Activated CD4-positive, alpha-beta memory T cell treated with anti-CD3 and anti-CD28 coated beads, Interleukin-2, amount 10 ng/mL, durations not matched to agents 7 days and 5 days (primary cell): ENCODE measurements at regions of chr12 and their contacts with region 1.

Region 1: DNA sequence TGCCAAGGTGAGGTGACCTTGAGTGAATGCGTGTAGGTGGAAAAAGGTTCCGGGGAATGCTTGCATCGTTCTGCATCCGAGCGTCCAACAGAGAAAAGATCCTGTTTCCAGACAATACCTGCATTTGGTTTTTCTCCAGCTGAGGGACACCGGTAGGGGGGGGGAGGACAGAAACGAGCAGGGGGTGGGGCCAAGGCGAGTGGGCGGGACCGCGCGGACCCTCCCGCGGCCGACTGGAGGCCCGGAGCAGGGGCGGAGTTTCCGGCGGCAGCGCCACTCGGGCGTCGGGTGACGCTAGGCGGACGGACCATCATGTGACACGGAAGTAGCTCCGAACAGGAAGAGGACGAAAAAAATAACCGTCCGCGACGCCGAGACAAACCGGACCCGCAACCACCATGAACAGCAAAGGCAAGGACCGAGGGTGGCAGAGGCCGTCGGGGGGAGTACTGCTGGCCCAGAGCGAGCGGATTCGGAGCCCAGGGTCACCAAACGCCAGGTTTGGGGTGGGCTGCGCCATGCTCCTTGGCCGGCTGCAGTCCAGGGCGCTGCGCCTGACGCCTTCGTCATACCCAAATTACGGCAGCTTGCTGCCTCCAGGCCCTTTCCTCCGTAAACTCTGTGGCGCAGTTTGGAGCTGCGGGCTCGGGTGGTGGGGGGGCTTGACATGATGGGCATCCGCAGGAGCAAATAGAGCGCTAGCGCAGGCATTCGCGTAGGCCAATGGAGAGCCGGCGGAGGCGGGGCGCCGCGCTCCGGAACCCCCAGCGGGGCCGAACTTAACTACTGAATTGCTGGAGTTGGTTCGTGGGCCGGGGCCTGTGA is at the start of gene DAZAP2:
- DNase-seq: peak; percentile 97
- H3K4me3 Mint-ChIP-seq: peak within 1 kb of the TSS; percentile 93
- H3K27ac Mint-ChIP-seq: peak within 1 kb of the TSS; percentile 98
- H3K4me1 Mint-ChIP-seq: peaks cover 39% of the 10 kb centered on the region
- H3K27me3 Mint-ChIP-seq: peaks cover 4% of the 10 kb centered on the region
- total RNA-seq, gene DAZAP2: 247 TPM

Region 2: DNA sequence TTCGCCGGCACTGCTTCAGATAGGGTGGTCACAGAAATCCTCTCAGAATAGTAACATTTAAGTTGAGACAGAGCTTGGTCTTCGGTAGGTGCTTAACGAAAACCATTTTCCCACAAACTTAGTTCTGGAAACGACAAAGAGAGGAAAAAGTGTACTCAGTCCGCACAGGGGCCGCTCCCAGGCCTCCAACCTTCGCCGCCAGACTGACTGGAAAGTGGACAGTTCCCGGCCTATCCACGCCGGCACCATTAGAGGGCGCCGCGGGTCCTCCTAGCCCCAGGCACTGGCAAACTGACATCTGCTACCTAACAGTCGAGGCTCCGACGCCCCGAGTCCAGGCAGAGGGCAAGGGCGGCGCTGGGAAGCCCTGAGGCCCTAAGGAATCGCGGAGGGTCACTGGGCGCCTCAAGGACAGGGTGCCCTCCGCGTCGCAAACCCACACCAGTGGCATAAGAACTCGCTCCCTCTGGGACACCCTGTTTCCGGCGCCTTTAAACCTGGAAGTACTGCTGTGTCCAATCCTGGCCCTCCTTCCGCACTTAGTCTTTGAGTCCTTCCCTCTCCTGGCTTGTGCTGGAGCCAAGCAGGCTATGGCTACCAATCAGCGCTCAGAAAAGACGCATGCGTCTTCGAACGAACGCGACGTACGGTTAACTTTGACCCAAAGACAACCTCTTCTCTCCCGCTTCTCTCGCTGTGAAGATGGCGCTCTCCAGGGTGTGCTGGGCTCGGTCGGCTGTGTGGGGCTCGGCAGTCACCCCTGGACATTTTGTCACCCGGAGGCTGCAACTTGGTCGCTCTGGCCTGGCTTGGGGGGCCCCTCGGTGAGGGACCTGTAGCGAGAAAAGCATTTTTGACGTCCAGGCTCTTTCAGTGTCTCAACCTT is 190.8 kb before region 1 on chr12 and contains the start of gene LETMD1:
- CTCF ChIA-PET with region 1: no interaction called
- POLR2A ChIA-PET with region 1: interaction called, 11 read pairs
- DNase-seq: peak; percentile 93
- H3K4me3 Mint-ChIP-seq: peak within 1 kb of the TSS; percentile 94
- H3K27ac Mint-ChIP-seq: peak within 1 kb of the TSS; percentile 92
- H3K4me1 Mint-ChIP-seq: peaks cover 37% of the 10 kb centered on the region
- H3K27me3 Mint-ChIP-seq: no peaks in the 10 kb centered on the region
- total RNA-seq, gene LETMD1: 92.1 to 93.9 TPM

Region 3: DNA sequence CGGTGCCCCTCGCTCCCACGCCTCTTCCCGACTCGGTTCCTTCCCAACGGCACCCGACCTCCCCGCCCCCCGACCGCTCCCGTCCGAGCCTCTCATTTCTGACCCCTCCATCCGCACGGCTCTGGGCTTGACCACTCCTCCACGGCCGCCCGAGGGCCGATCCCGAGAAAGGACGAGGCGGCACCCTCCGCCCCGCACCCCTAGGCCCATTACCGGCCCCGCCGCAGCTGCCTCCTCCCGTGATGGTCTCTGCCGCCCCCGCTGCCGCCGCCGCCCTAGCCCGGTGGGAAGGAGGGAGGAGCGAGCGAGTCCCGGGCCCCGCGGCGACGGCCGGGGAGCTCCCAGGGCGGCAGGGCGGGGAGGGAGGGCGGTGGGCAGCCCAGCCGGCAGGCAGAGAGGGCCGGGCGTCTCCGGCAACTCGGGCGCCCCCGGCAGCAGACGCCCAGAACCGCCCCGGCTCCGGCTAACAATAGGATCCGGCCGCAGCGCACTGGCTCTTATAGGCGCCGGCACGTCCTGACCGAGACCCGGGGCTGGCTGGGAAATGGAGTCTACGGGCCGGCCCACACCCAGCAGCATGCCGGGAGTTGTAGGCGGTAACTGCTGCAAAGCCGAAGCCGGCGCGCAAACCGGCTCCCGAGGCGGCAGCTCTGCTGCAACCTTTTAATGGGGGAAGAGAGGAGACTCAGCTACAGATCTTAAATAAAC is 155.4 kb before region 1 on chr12 and contains the start of gene CSRNP2:
- CTCF ChIA-PET with region 1: no interaction called
- POLR2A ChIA-PET with region 1: interaction called, 19 read pairs
- DNase-seq: peak; percentile 96
- H3K4me3 Mint-ChIP-seq: peak within 1 kb of the TSS; percentile 92
- H3K27ac Mint-ChIP-seq: peak within 1 kb of the TSS; percentile 71
- H3K4me1 Mint-ChIP-seq: peaks cover 42% of the 10 kb centered on the region
- H3K27me3 Mint-ChIP-seq: no peaks in the 10 kb centered on the region
- total RNA-seq, gene CSRNP2: 14.7 to 16.3 TPM

Region 4: GRCh38 chr12:51320695-51321320 is 82.1 kb after region 1 on chr12:
- CTCF ChIA-PET with region 1: no interaction called
- POLR2A ChIA-PET with region 1: interaction called, 23 read pairs
- DNase-seq: no peak
- H3K4me3 Mint-ChIP-seq: peak overlapping the region; percentile 88
- H3K27ac Mint-ChIP-seq: peak overlapping the region; percentile 99
- H3K4me1 Mint-ChIP-seq: peaks cover 76% of the 10 kb centered on the region
- H3K27me3 Mint-ChIP-seq: no peaks in the 10 kb centered on the region

Region 5: GRCh38 chr12:51326762-51327439 is 88.2 kb after region 1 on chr12:
- CTCF ChIA-PET with region 1: no interaction called
- POLR2A ChIA-PET with region 1: interaction called, 10 read pairs
- DNase-seq: peak; percentile 24
- H3K4me3 Mint-ChIP-seq: peak overlapping the region; percentile 45
- H3K27ac Mint-ChIP-seq: peak overlapping the region; percentile 97
- H3K4me1 Mint-ChIP-seq: peaks cover 70% of the 10 kb centered on the region
- H3K27me3 Mint-ChIP-seq: peaks cover 2% of the 10 kb centered on the region

Region 6: GRCh38 chr12:51460519-51460918 is 221.8 kb after region 1 on chr12:
- CTCF ChIA-PET with region 1: no interaction called
- POLR2A ChIA-PET with region 1: no interaction called
- DNase-seq: no peak
- H3K4me3 Mint-ChIP-seq: no peak overlapping the region
- H3K27ac Mint-ChIP-seq: no peak overlapping the region
- H3K4me1 Mint-ChIP-seq: no peaks in the 10 kb centered on the region
- H3K27me3 Mint-ChIP-seq: no peaks in the 10 kb centered on the region